Activated CD4-positive, alpha-beta T cell treated with anti-CD3 and anti-CD28 coated beads for 36 hours (primary cell): ENCODE measurements at regions of chr1 and their contacts with region 1.

Region 1: DNA sequence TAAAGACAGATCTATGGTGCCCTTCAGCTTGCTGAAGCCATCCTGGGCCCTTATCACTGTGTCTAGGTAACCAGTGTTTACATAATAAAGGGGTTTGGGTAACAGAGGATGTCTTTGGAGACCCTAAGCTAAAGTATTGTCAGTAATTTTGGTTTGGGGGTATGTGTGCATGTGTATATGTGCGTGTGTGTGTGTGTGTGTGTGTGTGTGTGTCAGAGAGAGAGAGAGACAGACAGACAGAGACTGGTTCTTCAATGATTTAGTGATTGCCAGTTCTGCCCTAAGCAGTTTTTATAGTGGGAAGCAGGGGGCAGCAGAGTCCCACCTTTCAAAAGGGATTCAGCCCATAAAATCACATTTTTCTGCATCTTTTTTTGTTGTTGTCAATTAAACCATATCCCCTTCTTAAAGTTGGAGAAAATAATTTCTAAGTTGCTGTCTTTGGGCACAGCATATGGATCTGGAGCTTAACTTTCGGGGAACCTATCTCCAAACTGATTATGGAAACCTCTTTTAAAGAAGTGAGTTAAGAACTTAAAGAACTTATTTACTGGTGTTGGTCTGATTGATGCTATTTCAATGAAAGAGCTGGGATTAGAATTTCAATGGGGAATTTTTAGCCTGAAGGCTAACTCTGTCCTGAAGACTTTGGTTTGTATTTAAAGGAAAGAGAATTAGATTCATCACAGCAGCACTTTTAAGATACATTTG is 51.1 kb downstream of the ZNF326 start:
- DNase-seq: peak; percentile 46
- ATAC-seq: no peak
- H3K4me3 Mint-ChIP-seq: no peak overlapping the region
- H3K27ac Mint-ChIP-seq: no peak overlapping the region
- H3K4me1 Mint-ChIP-seq: no peaks in the 10 kb centered on the region
- H3K27me3 Mint-ChIP-seq: peaks cover 3% of the 10 kb centered on the region

Region 2: GRCh38 chr1:89873770-89874169 is 172.2 kb before region 1 on chr1:
- CTCF ChIA-PET with region 1: no interaction called
- POLR2A ChIA-PET with region 1: no interaction called
- intact Hi-C with region 1: no loop called
- DNase-seq: no peak
- ATAC-seq: no peak
- H3K4me3 Mint-ChIP-seq: no peak overlapping the region
- H3K27ac Mint-ChIP-seq: no peak overlapping the region
- H3K4me1 Mint-ChIP-seq: peaks cover 66% of the 10 kb centered on the region
- H3K27me3 Mint-ChIP-seq: no peaks in the 10 kb centered on the region

Region 3: DNA sequence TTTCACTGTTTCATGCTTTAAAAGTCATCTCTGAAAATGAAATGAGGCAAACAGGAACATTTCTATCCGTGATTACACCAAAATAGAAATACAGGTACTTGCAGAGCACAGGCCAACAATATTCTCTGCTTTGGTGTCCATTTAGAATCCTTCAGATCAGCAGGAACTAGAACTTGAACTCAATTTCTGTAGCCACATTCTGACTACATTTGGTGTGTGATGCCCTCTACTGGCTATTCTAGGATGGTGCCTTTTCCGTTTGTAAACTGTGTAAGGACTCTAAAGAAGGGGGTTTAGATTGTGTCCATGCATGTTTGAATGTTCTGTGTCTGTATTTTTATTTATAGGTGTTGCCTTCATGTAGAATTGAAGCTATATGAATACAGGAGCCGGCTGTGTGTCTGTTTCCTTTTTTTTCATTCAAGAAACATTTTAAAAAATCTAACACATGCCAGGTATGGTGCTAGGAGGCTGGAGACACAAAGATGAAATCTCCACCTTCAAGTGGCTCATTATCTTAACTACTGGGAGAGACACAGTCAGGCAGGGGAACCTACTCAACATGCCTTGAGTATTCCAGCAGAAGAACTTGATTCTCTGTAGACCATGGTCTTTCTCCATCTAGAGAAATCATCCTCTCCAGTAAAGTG is 58.7 kb before region 1 on chr1:
- CTCF ChIA-PET with region 1: no interaction called
- POLR2A ChIA-PET with region 1: no interaction called
- intact Hi-C with region 1: no loop called
- DNase-seq: peak; percentile 54
- ATAC-seq: peak; percentile 90
- H3K4me3 Mint-ChIP-seq: no peak overlapping the region
- H3K27ac Mint-ChIP-seq: no peak overlapping the region
- H3K4me1 Mint-ChIP-seq: peaks cover 11% of the 10 kb centered on the region
- H3K27me3 Mint-ChIP-seq: peaks cover 2% of the 10 kb centered on the region

Region 4: GRCh38 chr1:90074970-90075391 is 29.0 kb after region 1 on chr1:
- CTCF ChIA-PET with region 1: no interaction called
- POLR2A ChIA-PET with region 1: no interaction called
- intact Hi-C with region 1: no loop called
- DNase-seq: no peak
- ATAC-seq: no peak
- H3K4me3 Mint-ChIP-seq: no peak overlapping the region
- H3K27ac Mint-ChIP-seq: no peak overlapping the region
- H3K4me1 Mint-ChIP-seq: no peaks in the 10 kb centered on the region
- H3K27me3 Mint-ChIP-seq: peaks cover 15% of the 10 kb centered on the region

Region 5: DNA sequence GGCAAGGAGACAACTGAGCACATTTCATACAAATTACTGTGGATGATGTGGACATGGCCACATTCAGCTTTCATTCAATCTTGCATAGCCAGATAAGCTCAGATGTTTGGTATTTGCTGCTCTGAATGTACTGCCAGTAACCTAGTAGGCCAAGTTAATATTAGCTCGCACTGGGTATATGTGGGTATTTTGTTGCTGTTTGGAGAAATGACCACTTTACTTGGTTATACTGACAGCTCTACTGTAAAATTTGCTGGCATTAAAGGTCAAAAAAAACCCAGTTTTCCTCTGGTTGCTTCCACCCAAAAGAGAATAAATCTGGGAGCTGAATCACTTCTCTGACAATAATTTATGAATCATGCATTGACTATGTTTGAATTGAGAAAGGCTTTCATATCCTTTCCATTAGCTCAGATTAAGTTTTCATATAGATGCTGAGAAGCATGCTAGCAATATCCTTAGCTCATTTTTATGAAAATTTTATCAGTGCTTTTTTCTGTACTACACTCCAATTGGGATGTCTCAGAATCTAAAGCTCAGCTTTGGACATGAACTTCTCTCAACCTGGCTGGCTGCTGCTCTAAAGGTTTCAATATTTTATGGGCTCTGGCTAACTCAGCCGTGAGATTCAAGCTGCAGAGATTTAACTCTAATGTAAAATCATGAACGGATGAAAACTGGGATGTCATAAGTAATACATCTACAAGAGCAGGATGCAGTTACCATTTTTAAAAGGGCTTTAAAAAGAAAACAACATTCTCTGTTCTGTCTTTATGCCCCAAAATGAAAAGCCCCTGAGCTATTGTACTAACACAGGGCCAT is 341.1 kb after region 1 on chr1:
- CTCF ChIA-PET with region 1: no interaction called
- POLR2A ChIA-PET with region 1: interaction called, 13 read pairs
- intact Hi-C with region 1: no loop called
- DNase-seq: no peak
- ATAC-seq: no peak
- H3K4me3 Mint-ChIP-seq: no peak overlapping the region
- H3K27ac Mint-ChIP-seq: no peak overlapping the region
- H3K4me1 Mint-ChIP-seq: no peaks in the 10 kb centered on the region
- H3K27me3 Mint-ChIP-seq: no peaks in the 10 kb centered on the region

Region 6: GRCh38 chr1:91234181-91234580 is 1188.2 kb after region 1 on chr1:
- CTCF ChIA-PET with region 1: no interaction called
- POLR2A ChIA-PET with region 1: no interaction called
- intact Hi-C with region 1: loop called in 1 of 2 experiments (anchors 10 kb)
- DNase-seq: no peak
- ATAC-seq: no peak
- H3K4me3 Mint-ChIP-seq: no peak overlapping the region
- H3K27ac Mint-ChIP-seq: no peak overlapping the region
- H3K4me1 Mint-ChIP-seq: no peaks in the 10 kb centered on the region
- H3K27me3 Mint-ChIP-seq: peaks cover 6% of the 10 kb centered on the region